BJ (cell line): ENCODE measurements at regions of chr2 and their contacts with region 1.

Region 1: DNA sequence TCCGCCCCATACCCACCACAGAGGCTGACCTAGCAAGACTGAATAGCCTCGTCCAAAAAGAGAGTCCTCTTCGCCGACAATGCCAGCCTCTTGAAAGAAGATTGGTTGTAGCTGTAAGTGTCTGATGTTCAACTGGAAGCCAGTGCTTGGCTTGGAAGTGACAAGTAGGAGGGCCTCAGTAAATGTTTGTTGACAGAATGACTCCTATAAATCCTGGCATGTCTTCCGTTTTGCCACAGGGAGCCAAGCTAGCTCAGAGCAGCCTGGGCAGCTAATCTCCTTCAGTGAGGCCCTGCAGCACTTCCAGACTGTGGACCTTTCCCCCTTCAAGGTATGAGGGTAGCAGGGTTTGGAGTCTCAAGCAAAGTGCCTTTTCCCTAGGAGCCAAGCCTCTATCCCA is 14.9 kb downstream of the ELMOD3 start:
- DNase-seq: no peak
- H3K4me3 ChIP-seq: no peak overlapping the region
- H3K27me3 ChIP-seq: no peaks in the 10 kb centered on the region
- CTCF ChIP-seq: no peak

Region 2: DNA sequence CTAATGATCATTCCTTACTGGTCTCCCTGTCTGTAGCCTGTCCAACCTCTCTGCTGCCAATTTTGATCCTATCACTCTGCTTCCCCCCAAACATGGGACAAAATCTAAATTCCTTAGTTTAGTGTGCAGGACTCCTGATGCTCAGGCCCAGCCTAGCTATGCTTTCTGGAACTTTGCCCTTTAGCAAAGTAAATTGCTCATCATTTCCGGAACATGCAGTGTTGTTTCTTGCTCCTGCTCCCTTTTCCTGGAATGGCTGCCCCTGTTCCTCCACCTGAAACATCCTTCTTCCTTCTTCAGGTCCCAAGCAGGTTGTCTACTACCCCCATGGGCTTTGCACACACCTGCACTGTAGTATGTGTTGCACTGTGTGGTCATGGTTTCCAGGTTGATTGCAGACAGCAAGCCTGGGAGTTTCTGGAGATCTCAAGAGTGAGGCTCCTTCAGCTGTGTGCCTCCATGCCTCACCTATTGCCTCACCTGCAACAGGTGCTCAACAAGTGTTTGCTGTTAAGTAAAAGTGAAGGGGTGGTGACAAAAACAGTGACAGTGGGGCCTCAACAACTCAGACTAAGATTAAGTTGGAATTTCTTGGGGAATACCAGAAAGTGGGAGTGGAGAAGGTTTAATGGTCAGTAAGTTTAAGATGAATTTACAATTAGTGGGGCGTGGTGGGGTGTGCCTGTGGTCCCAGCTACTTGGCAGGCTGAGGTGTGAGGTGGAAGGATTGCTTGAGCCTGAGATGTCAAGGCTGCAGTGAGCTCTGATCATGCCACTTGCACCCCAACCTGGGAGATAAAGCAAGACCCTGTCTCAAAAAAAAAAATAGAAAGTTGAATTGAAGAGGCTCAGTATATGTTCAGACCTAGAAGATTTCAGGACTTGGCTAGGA is 733.2 kb before region 1 on chr2:
- CTCF ChIA-PET with region 1: no interaction called
- POLR2A ChIA-PET with region 1: no interaction called
- DNase-seq: no peak
- H3K4me3 ChIP-seq: no peak overlapping the region
- H3K27me3 ChIP-seq: no peaks in the 10 kb centered on the region
- CTCF ChIP-seq: no peak

Region 3: DNA sequence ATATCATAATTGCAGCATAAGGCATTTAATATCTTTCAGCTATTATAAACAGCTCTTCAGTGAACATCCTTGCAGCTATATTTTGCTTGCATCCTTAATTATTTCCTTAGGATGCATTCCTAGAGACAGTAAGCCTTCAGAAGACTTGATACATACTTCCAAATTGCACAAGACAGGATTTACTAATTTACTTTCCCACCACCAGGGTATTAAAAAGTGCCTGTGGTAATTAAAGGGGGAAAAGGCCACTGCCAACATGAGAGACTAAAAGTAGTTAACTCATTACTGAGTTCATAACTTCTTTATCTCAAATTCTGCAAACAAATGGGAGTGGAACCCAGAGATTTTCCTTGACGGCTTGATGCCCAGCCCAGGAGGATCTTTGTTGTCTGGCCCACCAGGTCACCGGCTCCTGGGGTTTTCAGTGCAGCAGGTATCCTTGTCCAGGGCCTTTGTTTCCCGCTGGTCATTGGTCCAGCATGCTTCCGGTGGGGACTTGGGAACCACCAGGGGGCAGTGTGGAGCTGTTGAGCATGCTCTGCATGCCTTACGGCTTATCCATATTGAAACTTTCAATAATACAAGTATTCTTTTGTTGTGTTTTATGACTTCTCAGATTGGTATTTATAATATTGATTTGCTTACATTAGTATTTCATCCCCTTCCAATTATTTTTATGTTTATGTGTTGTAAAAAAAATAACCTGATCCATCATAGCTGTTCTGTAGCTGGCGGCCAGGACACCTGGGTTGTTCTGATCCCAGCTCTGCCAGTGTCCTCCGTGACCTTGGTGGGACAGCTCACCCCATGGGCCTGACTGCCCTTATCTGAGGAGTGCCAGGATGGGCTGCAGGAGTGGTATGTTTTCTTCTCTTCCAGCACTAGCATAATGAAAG is 103.1 kb before region 1 on chr2:
- CTCF ChIA-PET with region 1: no interaction called
- POLR2A ChIA-PET with region 1: no interaction called
- DNase-seq: no peak
- H3K4me3 ChIP-seq: no peak overlapping the region
- H3K27me3 ChIP-seq: no peaks in the 10 kb centered on the region
- CTCF ChIP-seq: peak; percentile 86

Region 4: DNA sequence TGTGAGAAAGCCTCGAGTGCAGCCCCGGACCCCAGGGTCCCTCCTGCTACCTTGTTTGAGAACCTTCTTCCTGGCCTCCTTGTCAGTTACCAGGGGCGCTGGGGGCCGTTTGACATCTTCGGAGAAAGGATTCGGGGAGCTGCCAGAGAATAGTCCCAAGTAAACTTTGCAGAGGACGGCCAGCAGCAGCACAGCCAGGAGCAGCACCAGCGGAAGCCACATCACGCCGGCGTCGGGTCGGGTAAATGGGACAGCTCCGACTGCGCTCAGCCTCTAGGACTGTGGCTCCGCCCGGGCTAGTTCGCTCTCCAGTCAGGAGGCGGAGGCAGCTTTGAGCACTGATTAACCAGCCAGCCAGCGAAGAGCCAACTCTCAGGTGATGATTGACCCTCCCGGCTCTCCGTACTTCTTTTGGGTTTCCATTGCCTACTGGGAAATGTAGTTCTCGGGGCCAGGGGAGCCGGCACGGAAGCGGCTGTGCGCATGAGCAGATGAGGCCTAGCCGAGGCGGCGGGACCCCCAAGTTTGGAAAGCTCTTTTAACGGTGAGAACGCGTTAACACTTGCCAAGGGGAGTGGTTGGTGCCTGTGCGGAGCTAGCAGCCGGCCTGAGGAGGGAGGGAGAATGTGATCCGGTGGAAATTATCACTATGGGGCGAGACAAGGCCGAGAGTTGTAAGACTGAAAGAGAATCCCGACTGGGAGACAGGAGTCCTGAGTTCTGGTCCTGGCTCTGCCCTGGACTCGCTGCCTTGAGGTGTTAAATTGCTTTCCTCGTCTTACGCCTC is 15.0 kb before region 1 on chr2 and contains the starts of genes ELMOD3 and RETSAT:
- CTCF ChIA-PET with region 1: interaction called, 12 read pairs
- POLR2A ChIA-PET with region 1: no interaction called
- DNase-seq: peak; percentile 92
- H3K4me3 ChIP-seq: peak within 1 kb of the TSS; percentile 82
- H3K27me3 ChIP-seq: no peaks in the 10 kb centered on the region
- CTCF ChIP-seq: no peak
- polyA plus RNA-seq, gene ELMOD3: 22.4 and 26.3 TPM in 2 replicates
- polyA plus RNA-seq, gene RETSAT: 50.3 and 54.4 TPM in 2 replicates

Region 5: GRCh38 chr2:85390941-85391669 is 21.6 kb after region 1 on chr2:
- CTCF ChIA-PET with region 1: interaction called, 11 read pairs
- POLR2A ChIA-PET with region 1: no interaction called
- DNase-seq: no peak
- H3K4me3 ChIP-seq: no peak overlapping the region
- H3K27me3 ChIP-seq: no peaks in the 10 kb centered on the region
- CTCF ChIP-seq: peak; percentile 70

Region 6: GRCh38 chr2:85577386-85578242 is 208.1 kb after region 1 on chr2 and contains the start of gene VAMP8:
- CTCF ChIA-PET with region 1: no interaction called
- POLR2A ChIA-PET with region 1: no interaction called
- DNase-seq: no peak
- H3K4me3 ChIP-seq: no peak within 1 kb of the TSS
- H3K27me3 ChIP-seq: peaks cover 2% of the 10 kb centered on the region; the same call in 1 of the 2 replicates
- CTCF ChIP-seq: no peak
- polyA plus RNA-seq, gene VAMP8: 0.70 and 2.0 TPM in 2 replicates